CD4-positive, alpha-beta T cell (primary cell): ENCODE measurements at regions of chr20 and their contacts with region 1.

Region 1: GRCh38 chr20:35303735-35304491 is 11.7 kb upstream of the FAM83C start:
- DNase-seq: peak; percentile 66 to 93 (median 78)
- ATAC-seq: peak; percentile 98
- H3K4me3 ChIP-seq: no peak overlapping the region
- H3K4me3 Mint-ChIP-seq: no peak overlapping the region
- H3K27ac ChIP-seq: no peak overlapping the region
- H3K27ac Mint-ChIP-seq: no peak overlapping the region
- H3K4me1 ChIP-seq: peaks cover 17% of the 10 kb centered on the region
- H3K4me1 Mint-ChIP-seq: peaks cover 8% of the 10 kb centered on the region
- H3K27me3 ChIP-seq: no peaks in the 10 kb centered on the region
- H3K27me3 Mint-ChIP-seq: no peaks in the 10 kb centered on the region
- CTCF ChIP-seq: peak; percentile 94

Region 2: DNA sequence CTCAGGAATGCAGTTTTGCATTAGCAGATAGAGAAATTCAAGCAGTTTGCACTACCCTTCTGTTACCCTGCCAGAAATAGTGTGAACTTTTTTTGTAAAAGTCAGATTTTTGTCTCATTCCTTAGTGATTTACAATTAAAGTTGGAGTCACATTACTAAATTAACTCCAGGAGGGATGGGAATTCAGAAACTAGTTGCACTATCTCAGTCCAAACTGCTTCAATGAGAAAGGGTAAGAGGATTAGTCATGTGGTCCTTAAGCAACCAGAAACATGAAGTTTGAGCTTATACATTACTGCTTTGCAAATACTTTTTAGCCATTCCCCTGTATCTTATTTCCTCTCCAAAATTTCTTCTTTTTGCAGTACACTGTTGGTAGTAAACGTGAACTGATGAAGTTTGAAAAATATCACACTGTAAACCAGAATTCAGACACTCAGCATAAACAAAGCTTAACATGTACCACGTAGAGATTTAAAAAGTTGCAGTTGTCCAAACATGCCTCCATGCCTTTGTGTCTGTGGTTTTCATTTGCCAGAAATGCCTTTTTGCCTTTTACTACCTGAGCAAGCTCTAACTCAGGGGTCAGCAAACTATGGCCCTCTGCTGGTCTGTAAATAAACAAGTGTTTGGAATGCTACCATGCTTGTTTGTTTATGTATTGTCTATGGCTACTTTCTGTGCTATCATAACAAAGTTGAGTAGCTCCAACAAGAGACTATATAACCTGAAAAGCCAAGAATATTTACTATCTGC is 550.0 kb before region 1 on chr20:
- CTCF ChIA-PET with region 1: no interaction called
- POLR2A ChIA-PET with region 1: no interaction called
- intact Hi-C with region 1: no loop called
- DNase-seq: no peak
- ATAC-seq: no peak
- H3K4me3 ChIP-seq: no peak overlapping the region
- H3K4me3 Mint-ChIP-seq: no peak overlapping the region
- H3K27ac ChIP-seq: no peak overlapping the region
- H3K27ac Mint-ChIP-seq: no peak overlapping the region
- H3K4me1 ChIP-seq: no peaks in the 10 kb centered on the region
- H3K4me1 Mint-ChIP-seq: no peaks in the 10 kb centered on the region
- H3K27me3 ChIP-seq: no peaks in the 10 kb centered on the region
- H3K27me3 Mint-ChIP-seq: no peaks in the 10 kb centered on the region
- CTCF ChIP-seq: no peak

Region 3: DNA sequence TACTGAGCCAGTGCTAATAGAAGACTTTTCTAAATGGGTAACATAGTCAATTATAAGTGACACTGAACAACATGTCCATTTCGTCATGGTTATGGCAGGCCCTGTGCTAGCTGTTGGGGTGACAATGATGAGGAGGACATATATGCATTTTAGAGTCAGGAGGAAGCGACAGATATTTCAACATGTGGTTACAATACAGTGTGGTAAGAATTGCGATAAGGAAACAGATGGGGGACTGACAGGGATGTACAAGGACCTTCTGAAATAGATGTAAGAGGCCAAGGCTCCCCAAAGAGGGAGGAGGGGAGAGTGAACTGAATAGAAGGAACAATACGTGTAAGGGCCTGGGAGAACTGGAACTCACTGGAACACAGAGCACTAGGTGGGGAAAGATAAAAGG is 65.7 kb before region 1 on chr20:
- CTCF ChIA-PET with region 1: no interaction called
- POLR2A ChIA-PET with region 1: no interaction called
- intact Hi-C with region 1: no loop called
- DNase-seq: no peak
- ATAC-seq: no peak
- H3K4me3 ChIP-seq: no peak overlapping the region
- H3K4me3 Mint-ChIP-seq: no peak overlapping the region
- H3K27ac ChIP-seq: no peak overlapping the region
- H3K27ac Mint-ChIP-seq: no peak overlapping the region
- H3K4me1 ChIP-seq: no peaks in the 10 kb centered on the region
- H3K4me1 Mint-ChIP-seq: no peaks in the 10 kb centered on the region
- H3K27me3 ChIP-seq: no peaks in the 10 kb centered on the region
- H3K27me3 Mint-ChIP-seq: peaks cover 13% of the 10 kb centered on the region
- CTCF ChIP-seq: no peak

Region 4: DNA sequence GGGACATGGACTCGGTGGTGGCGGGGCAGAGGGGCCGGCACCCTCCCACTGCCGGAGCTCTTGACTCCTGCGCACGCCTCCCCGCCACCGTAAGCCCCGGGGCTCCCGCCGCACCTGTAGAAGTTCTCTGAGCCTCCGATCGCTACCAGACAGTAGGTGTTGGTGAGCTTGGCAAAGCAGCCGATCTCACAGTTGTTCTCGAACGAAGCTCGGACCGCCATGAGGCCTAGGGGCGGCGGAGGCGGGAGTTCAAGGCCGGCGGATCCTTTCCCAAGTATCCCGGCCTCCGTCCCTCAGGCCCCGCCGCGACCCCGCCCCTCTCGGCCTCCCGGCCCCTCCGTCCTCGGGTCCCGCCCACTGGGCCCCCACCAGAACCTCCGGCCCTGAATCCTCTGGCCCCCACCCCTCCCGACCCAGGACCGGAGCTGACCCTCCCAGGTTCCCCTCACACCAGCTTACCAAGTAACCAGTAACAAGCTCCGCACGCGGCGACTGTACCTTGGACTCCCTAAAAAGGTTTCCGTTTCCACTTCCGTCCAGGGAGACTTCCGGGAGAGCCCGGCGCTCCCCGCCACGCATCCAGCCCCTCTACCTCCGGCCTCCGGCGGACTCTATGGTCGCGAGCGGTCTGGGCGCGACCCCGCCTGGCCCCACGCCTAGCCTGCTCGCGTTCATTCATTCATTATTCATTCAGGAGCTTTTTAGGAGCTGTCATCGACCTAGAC is 19.5 kb before region 1 on chr20 and contains the start of gene EIF6:
- CTCF ChIA-PET with region 1: interaction called, 12 read pairs
- POLR2A ChIA-PET with region 1: interaction called, 3 read pairs
- intact Hi-C with region 1: no loop called
- DNase-seq: peak; percentile 32 to 83 (median 64)
- ATAC-seq: peak; percentile 69
- H3K4me3 ChIP-seq: peak within 1 kb of the TSS; percentile 88
- H3K4me3 Mint-ChIP-seq: peak within 1 kb of the TSS; percentile 97
- H3K27ac ChIP-seq: peak within 1 kb of the TSS; percentile 61 to 71
- H3K27ac Mint-ChIP-seq: peak within 1 kb of the TSS; percentile 84
- H3K4me1 ChIP-seq: peaks cover 22% of the 10 kb centered on the region
- H3K4me1 Mint-ChIP-seq: peaks cover 22% of the 10 kb centered on the region
- H3K27me3 ChIP-seq: no peaks in the 10 kb centered on the region
- H3K27me3 Mint-ChIP-seq: no peaks in the 10 kb centered on the region
- CTCF ChIP-seq: no peak
- total RNA-seq, gene EIF6: 24.9 to 25.8 TPM

Region 5: GRCh38 chr20:35344354-35344837 is 40.5 kb after region 1 on chr20:
- CTCF ChIA-PET with region 1: no interaction called
- POLR2A ChIA-PET with region 1: no interaction called
- intact Hi-C with region 1: no loop called
- DNase-seq: no peak
- ATAC-seq: no peak
- H3K4me3 ChIP-seq: no peak overlapping the region
- H3K4me3 Mint-ChIP-seq: no peak overlapping the region
- H3K27ac ChIP-seq: no peak overlapping the region
- H3K27ac Mint-ChIP-seq: no peak overlapping the region
- H3K4me1 ChIP-seq: no peaks in the 10 kb centered on the region
- H3K4me1 Mint-ChIP-seq: no peaks in the 10 kb centered on the region
- H3K27me3 ChIP-seq: no peaks in the 10 kb centered on the region
- H3K27me3 Mint-ChIP-seq: no peaks in the 10 kb centered on the region
- CTCF ChIP-seq: no peak

Region 6: DNA sequence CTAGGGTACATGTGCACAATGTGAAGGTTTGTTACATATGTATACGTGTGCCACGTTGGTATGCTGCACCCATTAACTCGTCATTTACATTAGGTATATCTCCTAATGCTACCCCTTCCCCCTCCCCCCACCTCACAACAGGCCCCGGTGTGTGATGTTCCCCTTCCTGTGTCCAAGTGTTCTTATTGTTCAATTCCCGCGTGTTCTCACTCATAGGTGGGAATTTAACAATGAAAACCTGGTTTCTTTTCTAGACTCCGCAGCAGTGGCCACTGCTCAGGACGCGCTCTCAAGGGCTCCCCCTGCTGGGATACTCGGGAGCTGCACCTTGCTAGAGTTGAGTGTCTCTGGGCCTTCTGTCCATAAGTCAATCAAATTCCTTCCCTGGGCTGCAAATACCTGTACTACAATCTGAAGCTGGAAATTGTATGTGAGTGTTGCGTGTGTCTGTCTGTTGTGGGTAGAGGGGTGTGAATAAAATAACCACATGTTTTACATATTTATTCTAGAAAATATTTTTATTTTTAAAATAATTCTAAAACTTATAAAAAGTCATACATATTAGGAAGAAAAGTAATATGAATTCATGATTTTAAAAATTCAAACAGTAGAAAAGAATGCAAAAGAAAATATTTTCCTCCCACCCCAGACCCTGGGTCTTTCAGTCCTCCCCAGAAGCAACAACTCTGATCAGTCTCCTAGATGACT is 143.3 kb after region 1 on chr20:
- CTCF ChIA-PET with region 1: interaction called, 7 read pairs
- POLR2A ChIA-PET with region 1: no interaction called
- intact Hi-C with region 1: loop called in 1 of 2 experiments (anchors 1 kb)
- DNase-seq: peak; percentile 79 to 94 (median 89)
- ATAC-seq: peak; percentile 99
- H3K4me3 ChIP-seq: peak overlapping the region; percentile 40
- H3K4me3 Mint-ChIP-seq: peak overlapping the region; percentile 87
- H3K27ac ChIP-seq: no peak overlapping the region
- H3K27ac Mint-ChIP-seq: no peak overlapping the region
- H3K4me1 ChIP-seq: peaks cover 5% of the 10 kb centered on the region
- H3K4me1 Mint-ChIP-seq: peaks cover 4% of the 10 kb centered on the region
- H3K27me3 ChIP-seq: peaks cover 0 to 1% of the 10 kb centered on the region in 2 experiments
- H3K27me3 Mint-ChIP-seq: peaks cover 6% of the 10 kb centered on the region
- CTCF ChIP-seq: peak; percentile 92

Region 7: DNA sequence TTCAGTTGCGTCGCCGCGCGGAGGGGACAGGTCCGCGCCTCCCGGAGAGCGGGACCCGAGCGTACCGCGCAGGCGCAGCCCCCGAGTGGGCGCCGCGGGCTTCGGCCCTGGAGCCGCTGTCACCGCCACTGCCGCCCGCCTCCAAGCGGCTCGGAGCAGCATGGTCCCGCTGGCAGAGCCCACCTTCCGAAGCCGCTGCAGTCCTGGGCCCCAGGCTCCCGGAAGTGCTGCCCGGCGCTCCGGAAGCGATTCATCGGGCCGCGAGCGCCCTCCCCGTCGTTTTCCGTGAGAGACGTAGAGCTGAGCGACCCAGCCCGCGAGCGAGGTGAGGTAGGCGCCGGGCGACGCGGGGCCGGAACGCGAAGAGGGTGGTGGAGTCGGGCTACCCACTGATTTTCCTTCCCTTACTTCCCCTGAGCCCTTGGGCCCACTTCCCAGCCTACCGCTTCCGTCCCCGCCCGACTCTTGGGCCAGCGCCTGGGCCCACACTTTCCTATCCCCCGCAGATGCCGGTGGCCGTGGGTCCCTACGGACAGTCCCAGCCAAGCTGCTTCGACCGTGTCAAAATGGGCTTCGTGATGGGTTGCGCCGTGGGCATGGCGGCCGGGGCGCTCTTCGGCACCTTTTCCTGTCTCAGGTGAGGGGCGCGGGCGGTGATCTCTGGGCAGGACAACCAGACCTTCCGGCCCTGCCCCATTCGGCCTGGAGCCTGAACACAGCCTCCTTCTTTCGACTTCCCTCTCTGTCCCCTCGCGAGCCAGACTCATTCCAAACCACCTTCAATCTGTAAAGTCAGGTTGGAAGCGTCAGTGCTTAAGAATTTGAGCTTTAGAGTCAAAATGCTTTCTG is 395.4 kb after region 1 on chr20 and contains the starts of genes NFS1 and ROMO1:
- CTCF ChIA-PET with region 1: no interaction called
- POLR2A ChIA-PET with region 1: no interaction called
- intact Hi-C with region 1: no loop called
- DNase-seq: peak; percentile 77 to 94 (median 82)
- ATAC-seq: peak; percentile 89
- H3K4me3 ChIP-seq: peak within 1 kb of the TSS; percentile 95
- H3K4me3 Mint-ChIP-seq: peak within 1 kb of the TSS; percentile 95
- H3K27ac ChIP-seq: peak within 1 kb of the TSS; percentile 93 to 97
- H3K27ac Mint-ChIP-seq: peak within 1 kb of the TSS; percentile 84
- H3K4me1 ChIP-seq: peaks cover 23% of the 10 kb centered on the region
- H3K4me1 Mint-ChIP-seq: peaks cover 52% of the 10 kb centered on the region
- H3K27me3 ChIP-seq: no peaks in the 10 kb centered on the region
- H3K27me3 Mint-ChIP-seq: no peaks in the 10 kb centered on the region
- CTCF ChIP-seq: peak; percentile 11
- total RNA-seq, gene NFS1: 10.6 to 11.5 TPM
- total RNA-seq, gene ROMO1: 32.9 to 35.8 TPM